AG04450 (cell line): ENCODE measurements at regions of chr11 and their contacts with region 1.

Region 1: DNA sequence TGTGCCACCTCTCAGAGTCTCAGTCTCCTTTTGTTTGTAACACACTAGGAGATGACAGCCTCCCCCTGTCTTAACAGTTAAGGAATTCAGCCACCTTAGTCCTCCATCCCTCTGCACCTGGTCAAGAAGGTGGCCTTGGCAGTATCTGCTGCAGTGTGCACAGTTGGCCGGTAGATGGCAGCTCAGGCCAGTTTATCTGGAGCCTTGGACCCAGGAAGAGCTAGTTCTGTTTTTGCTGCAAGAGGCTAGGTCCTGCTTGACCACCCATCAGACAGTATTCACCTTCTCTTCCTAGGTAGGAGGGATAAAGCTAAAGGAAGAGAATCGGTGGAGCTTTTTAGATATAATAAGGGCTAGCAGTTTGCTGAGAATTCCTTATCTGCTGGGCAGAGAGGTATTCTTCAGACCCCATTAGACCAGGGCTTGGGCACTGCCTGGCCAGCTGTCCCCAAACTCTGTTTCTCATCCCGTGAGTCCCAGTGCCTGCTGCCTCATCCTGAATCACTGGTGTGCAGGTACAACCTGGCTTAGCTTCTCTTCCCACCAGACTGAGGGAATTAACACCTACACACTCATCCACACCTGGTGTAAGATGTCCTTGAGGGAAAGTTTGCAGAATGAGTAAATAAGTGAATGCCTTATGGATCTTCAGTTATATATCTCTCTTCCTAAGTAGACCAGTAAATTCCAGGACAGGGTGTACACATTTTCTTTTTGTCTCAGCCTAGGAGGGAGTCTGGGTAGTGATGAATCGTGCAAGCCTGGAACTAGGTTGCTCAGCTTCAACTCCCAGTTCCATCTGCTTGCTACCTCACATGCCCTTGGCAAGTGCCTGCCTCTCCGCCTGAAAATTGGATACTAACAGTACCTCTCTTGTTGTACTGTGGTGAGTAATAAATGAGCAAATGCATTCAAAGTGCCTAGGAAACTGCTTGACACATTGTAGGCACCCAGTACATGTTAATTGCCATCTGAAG is 70.8 kb upstream of the NARS2 start:
- DNase-seq: peak; percentile 48
- H3K4me3 ChIP-seq: no peak overlapping the region
- H3K27ac ChIP-seq: no peak overlapping the region
- H3K27me3 ChIP-seq: no peaks in the 10 kb centered on the region
- CTCF ChIP-seq: peak; percentile 95

Region 2: DNA sequence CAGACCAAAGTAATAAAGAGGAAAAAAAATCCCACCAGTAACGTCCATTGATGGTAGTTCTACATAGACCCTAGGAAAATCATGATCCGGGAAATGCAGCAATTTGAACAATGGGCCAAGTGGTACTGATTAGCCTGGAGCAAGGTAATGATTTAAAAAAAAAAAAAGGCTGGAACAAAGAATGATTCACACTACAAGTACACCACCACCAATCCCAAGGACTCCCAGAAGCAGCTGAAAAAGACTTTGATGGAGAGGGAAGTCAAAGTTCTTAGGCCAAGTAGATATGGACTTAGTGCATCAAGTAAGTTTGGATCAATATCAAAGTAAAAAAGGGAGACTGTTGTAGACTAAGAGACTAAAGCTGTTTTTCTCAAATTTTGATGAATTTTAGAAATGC is 634.2 kb before region 1 on chr11:
- CTCF ChIA-PET with region 1: no interaction called
- POLR2A ChIA-PET with region 1: no interaction called
- DNase-seq: no peak
- H3K4me3 ChIP-seq: no peak overlapping the region
- H3K27ac ChIP-seq: no peak overlapping the region
- H3K27me3 ChIP-seq: no peaks in the 10 kb centered on the region
- CTCF ChIP-seq: no peak

Region 3: GRCh38 chr11:78715639-78716311 is 70.3 kb after region 1 on chr11:
- CTCF ChIA-PET with region 1: interaction called, 55 read pairs
- POLR2A ChIA-PET with region 1: interaction called, 3 read pairs
- DNase-seq: peak; percentile 54
- H3K4me3 ChIP-seq: no peak overlapping the region
- H3K27ac ChIP-seq: peak overlapping the region; percentile 39
- H3K27me3 ChIP-seq: no peaks in the 10 kb centered on the region
- CTCF ChIP-seq: peak; percentile 81

Region 4: GRCh38 chr11:78840200-78840599 is 194.7 kb after region 1 on chr11:
- CTCF ChIA-PET with region 1: interaction called, 18 read pairs
- POLR2A ChIA-PET with region 1: no interaction called
- DNase-seq: peak; percentile 78
- H3K4me3 ChIP-seq: no peak overlapping the region; the same call in 1 of the 2 replicates
- H3K27ac ChIP-seq: peak overlapping the region; percentile 94
- H3K27me3 ChIP-seq: no peaks in the 10 kb centered on the region
- CTCF ChIP-seq: no peak

Region 5: GRCh38 chr11:78886616-78887015 is 241.1 kb after region 1 on chr11:
- CTCF ChIA-PET with region 1: no interaction called
- POLR2A ChIA-PET with region 1: no interaction called
- DNase-seq: peak; percentile 8
- H3K4me3 ChIP-seq: no peak overlapping the region
- H3K27ac ChIP-seq: no peak overlapping the region
- H3K27me3 ChIP-seq: no peaks in the 10 kb centered on the region
- CTCF ChIP-seq: no peak

Region 6: GRCh38 chr11:79052544-79052943 is 407.0 kb after region 1 on chr11:
- CTCF ChIA-PET with region 1: interaction called, 46 read pairs
- POLR2A ChIA-PET with region 1: no interaction called
- DNase-seq: no peak
- H3K4me3 ChIP-seq: no peak overlapping the region
- H3K27ac ChIP-seq: no peak overlapping the region
- H3K27me3 ChIP-seq: no peaks in the 10 kb centered on the region
- CTCF ChIP-seq: peak; percentile 29; the same call in 1 of the 2 replicates

Region 7: DNA sequence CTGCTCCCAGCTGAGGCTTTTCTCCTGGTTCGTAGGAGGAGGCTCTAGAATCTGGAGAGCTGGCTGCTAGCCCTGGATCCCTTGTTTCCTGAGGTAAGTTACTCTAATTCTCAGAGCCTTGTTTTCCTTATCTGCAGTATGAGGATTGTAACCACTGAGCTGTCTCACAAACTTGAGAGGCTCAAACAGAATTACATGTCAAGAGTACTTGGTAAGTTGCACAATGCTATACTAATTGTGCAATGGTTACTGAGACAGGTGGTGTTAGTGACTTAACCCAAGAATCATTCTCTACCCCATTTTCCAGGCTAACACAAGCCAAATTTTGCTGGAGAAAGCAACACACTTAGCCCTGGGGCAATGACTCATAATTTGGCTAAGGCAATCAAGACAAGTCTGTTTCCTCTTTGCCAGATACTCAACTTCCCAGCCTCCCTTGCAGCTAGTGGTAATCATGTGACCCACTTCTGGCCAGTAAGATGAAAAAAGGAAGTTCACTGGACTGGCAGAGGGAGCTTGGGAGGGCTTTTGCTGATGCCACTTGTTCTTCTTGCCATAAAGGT is 447.4 kb after region 1 on chr11:
- CTCF ChIA-PET with region 1: interaction called, 128 read pairs
- POLR2A ChIA-PET with region 1: no interaction called
- DNase-seq: peak; percentile 99
- H3K4me3 ChIP-seq: no peak overlapping the region
- H3K27ac ChIP-seq: peak overlapping the region; percentile 87
- H3K27me3 ChIP-seq: no peaks in the 10 kb centered on the region
- CTCF ChIP-seq: no peak

Region 8: GRCh38 chr11:79253280-79253679 is 607.8 kb after region 1 on chr11:
- CTCF ChIA-PET with region 1: interaction called, 10 read pairs
- POLR2A ChIA-PET with region 1: no interaction called
- DNase-seq: no peak
- H3K4me3 ChIP-seq: no peak overlapping the region
- H3K27ac ChIP-seq: no peak overlapping the region
- H3K27me3 ChIP-seq: no peaks in the 10 kb centered on the region
- CTCF ChIP-seq: no peak

Region 9: DNA sequence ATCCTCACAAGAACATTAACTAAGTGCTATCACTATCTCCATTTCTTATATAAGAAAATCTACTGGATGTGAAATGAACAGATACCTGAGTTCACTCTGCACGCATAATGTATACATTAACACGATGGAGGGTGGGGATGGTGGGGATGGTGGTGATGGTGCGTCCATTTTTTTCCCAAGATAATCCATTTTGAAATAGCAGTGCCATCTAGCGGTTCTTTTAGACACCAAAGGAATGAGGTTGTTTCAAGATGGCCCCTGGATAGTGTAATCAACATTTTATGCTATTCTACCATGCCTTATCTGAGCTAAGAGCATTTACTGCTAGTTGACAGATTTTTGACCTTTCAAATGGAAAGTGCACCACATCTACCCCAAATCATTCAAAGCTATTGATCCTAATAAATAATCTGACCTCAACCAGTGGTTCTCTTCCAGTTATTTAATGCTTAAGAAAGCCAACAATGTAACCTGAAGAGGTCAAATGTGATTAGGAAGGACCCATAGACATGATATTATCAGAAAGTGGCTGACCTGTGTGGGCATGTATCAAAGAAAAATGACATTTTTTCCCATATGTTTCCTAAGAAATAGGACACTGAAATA is 1510.0 kb after region 1 on chr11:
- CTCF ChIA-PET with region 1: interaction called, 10 read pairs
- POLR2A ChIA-PET with region 1: no interaction called
- DNase-seq: no peak
- H3K4me3 ChIP-seq: no peak overlapping the region
- H3K27ac ChIP-seq: no peak overlapping the region
- H3K27me3 ChIP-seq: no peaks in the 10 kb centered on the region
- CTCF ChIP-seq: peak; percentile 73